ENCODE measurements at regions of chr11 and their contacts with region 1.

Region 1: GRCh38 chr11:41334007-41334933 is 125.2 kb downstream of the LRRC4C start:
- DNase-seq: no peak
- ATAC-seq: no peak
- H3K4me3 ChIP-seq: no peak overlapping the region
- H3K27ac ChIP-seq: no peak overlapping the region
- H3K4me1 ChIP-seq: no peaks in the 10 kb centered on the region
- H3K27me3 ChIP-seq: no peaks in the 10 kb centered on the region
- CTCF ChIP-seq: no peak
- EP300 ChIP-seq: no peak
- POLR2A ChIP-seq: no peak
- RAD21 ChIP-seq: no peak

Region 2: GRCh38 chr11:41281131-41281742 is 53.0 kb before region 1 on chr11:
- CTCF ChIA-PET with region 1: no interaction called
- POLR2A ChIA-PET with region 1: no interaction called
- RAD21 ChIA-PET with region 1: no interaction called
- SMC1A ChIA-PET with region 1: no interaction called
- in situ Hi-C with region 1: no loop called
- intact Hi-C with region 1: loop called (anchors 5 kb)
- DNase-seq: no peak
- ATAC-seq: no peak
- H3K4me3 ChIP-seq: no peak overlapping the region
- H3K27ac ChIP-seq: no peak overlapping the region
- H3K4me1 ChIP-seq: no peaks in the 10 kb centered on the region
- H3K27me3 ChIP-seq: no peaks in the 10 kb centered on the region
- CTCF ChIP-seq: no peak
- EP300 ChIP-seq: no peak
- POLR2A ChIP-seq: no peak
- RAD21 ChIP-seq: no peak

Region 3: DNA sequence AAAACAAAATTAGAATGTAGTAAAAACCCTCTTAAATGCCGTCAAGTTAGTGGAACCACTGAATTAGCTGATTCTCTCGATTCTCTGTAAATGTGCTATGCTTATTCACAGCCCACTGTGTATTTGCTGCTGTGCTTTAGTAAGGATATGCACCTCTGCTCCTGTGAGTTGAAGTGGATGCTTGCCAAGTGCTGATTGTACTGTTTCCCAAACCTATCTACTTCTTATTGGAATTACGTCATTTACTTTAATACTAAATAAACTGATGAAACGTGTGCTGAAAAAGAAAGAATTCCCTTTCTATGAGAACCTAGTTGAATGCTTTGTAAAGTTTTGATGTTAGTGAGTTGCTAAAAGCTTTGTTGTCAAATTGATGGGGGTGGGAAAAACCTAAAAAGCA is 33.2 kb before region 1 on chr11:
- CTCF ChIA-PET with region 1: no interaction called
- POLR2A ChIA-PET with region 1: no interaction called
- RAD21 ChIA-PET with region 1: no interaction called
- SMC1A ChIA-PET with region 1: no interaction called
- in situ Hi-C with region 1: no loop called
- intact Hi-C with region 1: loop called (anchors 5 kb)
- DNase-seq: no peak
- ATAC-seq: no peak
- H3K4me3 ChIP-seq: no peak overlapping the region
- H3K27ac ChIP-seq: no peak overlapping the region
- H3K4me1 ChIP-seq: no peaks in the 10 kb centered on the region
- H3K27me3 ChIP-seq: no peaks in the 10 kb centered on the region
- CTCF ChIP-seq: no peak
- EP300 ChIP-seq: no peak
- POLR2A ChIP-seq: no peak
- RAD21 ChIP-seq: no peak

Region 4: GRCh38 chr11:41400819-41401382 is 66.6 kb after region 1 on chr11:
- CTCF ChIA-PET with region 1: no interaction called
- POLR2A ChIA-PET with region 1: no interaction called
- RAD21 ChIA-PET with region 1: no interaction called
- SMC1A ChIA-PET with region 1: no interaction called
- in situ Hi-C with region 1: no loop called
- intact Hi-C with region 1: no loop called
- DNase-seq: no peak
- ATAC-seq: no peak
- H3K4me3 ChIP-seq: no peak overlapping the region
- H3K27ac ChIP-seq: no peak overlapping the region
- H3K4me1 ChIP-seq: no peaks in the 10 kb centered on the region
- H3K27me3 ChIP-seq: no peaks in the 10 kb centered on the region
- CTCF ChIP-seq: no peak
- EP300 ChIP-seq: no peak
- POLR2A ChIP-seq: no peak
- RAD21 ChIP-seq: no peak

Region 5: GRCh38 chr11:41950470-41951143 is 616.3 kb after region 1 on chr11:
- CTCF ChIA-PET with region 1: no interaction called
- POLR2A ChIA-PET with region 1: no interaction called
- RAD21 ChIA-PET with region 1: no interaction called
- SMC1A ChIA-PET with region 1: no interaction called
- in situ Hi-C with region 1: no loop called
- intact Hi-C with region 1: no loop called
- DNase-seq: no peak
- ATAC-seq: peak; percentile 81
- H3K4me3 ChIP-seq: no peak overlapping the region
- H3K27ac ChIP-seq: no peak overlapping the region
- H3K4me1 ChIP-seq: no peaks in the 10 kb centered on the region
- H3K27me3 ChIP-seq: no peaks in the 10 kb centered on the region; a peak in 1 of 4 replicates
- CTCF ChIP-seq: no peak
- EP300 ChIP-seq: peak in 1 of 2 experiments; percentile 26; a peak in 1 of 4 replicates
- POLR2A ChIP-seq: no peak
- RAD21 ChIP-seq: no peak